ENCODE measurements at regions of chr7 and their contacts with region 1.

Region 1: DNA sequence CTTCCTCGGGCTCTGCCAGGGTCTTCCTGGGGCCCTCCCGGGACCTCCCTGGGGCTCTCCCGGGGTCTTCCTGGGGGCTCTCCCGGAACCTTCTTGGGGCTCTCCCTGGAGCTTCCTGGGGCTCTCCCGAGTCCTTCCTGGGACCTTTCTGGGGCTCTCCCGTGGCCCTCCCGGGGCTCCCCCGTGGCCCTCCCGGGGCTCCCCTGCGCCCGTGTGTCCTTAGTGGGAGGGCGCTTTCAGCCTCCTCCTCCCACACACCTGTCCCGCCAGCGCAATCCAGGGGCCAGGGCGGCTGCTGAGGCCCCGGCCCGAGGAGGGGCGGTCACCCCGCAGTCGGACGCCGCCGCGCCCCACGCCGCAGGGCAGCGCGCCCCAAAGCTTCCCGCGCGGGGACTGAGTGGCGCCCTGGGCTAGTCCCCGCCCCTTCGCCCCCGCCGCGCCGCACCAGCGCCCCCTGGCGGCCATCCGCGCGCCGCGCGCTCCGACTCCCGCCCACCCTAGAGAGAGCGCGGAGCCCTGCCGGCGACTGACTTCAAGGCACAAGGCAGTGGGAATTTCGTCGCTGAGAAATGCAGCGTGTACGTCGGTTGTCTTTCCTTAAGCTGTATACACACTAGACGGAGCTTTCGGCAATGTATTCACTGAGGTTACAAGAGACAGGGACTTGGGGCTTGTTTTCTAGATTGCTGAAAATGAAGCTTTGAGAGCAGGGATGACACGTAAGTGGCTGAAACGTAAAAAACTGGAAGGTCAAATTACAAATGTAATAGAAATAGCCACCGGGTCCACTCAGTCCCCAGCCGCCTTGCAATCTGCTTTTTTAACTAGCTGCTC is 47.1 kb downstream of the INSIG1 start:
- DNase-seq: peak; percentile 87
- H3K4me3 Mint-ChIP-seq: peak overlapping the region; percentile 53
- H3K27ac Mint-ChIP-seq: no peak overlapping the region
- H3K4me1 Mint-ChIP-seq: peaks cover 13% of the 10 kb centered on the region
- H3K27me3 Mint-ChIP-seq: peaks cover 12% of the 10 kb centered on the region

Region 2: DNA sequence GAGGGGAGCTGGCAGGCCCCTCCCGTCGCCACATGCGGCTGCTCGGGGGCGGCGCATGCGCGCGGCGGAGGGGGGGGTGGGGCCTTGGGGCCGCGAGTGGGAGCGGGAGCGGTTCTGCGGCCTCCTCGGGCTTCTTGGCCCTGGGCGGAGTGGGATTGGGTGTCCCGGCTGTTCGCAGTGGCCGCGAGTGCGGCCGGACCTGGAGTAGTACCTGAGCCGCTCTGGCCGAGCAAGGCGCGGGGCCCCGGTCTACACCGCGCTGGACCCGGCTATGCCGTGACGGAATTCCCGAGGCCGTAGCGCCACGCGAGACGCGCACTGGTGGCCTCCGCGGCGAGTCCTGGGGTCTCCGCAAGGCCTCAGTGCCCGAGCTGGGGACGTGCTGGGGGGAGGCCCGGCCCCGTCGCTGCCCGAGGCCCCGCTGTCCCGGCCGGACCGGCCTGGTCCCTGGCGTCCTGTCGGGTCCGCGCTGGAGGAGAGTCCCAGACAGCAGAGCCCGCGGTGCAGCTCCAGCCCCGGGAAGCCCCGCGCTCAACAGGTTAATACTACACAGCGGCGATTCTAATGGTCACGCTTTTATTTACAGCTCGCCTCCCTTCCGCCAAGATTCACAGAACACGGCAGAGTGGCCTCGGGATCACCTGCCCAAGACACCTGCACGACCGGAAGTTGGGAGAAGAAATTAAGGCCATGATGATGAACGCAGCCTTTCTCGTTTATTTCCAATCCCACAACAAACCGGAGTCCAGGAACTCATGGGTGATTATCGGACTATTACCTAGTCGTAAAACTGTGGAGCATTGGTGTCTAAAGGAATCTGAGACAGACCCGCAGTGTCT is 341.2 kb before region 1 on chr7:
- CTCF ChIA-PET with region 1: interaction called, 3 read pairs
- intact Hi-C with region 1: loop called (anchors 1 kb)
- DNase-seq: peak; percentile 75
- H3K4me3 Mint-ChIP-seq: peak overlapping the region; percentile 92
- H3K27ac Mint-ChIP-seq: peak overlapping the region; percentile 89
- H3K4me1 Mint-ChIP-seq: peaks cover 7% of the 10 kb centered on the region
- H3K27me3 Mint-ChIP-seq: no peaks in the 10 kb centered on the region

Region 3: DNA sequence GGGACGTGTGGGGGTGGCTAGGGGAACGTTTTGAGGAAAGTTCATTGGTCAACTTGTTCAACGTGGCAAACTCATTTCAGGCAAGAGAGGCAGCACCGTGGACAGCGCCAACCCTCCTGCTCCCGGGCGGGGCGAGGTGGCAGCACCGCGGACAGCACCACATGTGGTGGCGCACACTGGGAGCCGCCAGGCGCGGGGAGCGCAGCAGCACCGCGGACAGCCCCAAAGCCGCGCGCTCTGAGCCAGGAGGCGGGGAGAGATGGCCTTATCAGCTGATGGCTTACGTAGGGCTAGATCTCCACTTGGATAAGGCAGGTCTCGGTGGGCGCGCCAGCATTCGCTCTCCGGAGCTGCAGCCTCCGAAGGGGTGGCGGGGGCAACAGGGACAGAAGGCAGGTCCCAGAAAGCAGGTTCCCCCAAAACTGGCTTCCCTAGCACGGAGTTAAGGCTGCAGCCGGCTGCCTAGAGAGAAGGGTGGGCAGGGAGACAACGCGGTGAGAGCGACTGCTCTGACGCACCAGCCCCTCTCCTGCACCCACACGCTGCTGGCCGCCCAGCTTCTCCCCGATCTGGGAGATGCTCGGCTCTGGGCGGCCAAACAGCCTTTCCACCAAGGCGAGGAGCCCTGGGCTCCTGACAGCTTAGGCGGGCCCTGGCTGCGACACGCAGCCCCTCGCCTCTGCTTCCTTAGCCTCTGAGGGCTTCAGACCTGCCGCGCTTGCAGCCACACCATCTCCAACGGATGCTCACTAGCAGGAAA is 274.6 kb before region 1 on chr7 and contains the start of gene HTR5A:
- CTCF ChIA-PET with region 1: no interaction called
- intact Hi-C with region 1: loop called (anchors 10 kb)
- DNase-seq: peak; percentile 92
- H3K4me3 Mint-ChIP-seq: no peak within 1 kb of the TSS
- H3K27ac Mint-ChIP-seq: no peak within 1 kb of the TSS
- H3K4me1 Mint-ChIP-seq: peaks cover 2% of the 10 kb centered on the region
- H3K27me3 Mint-ChIP-seq: peaks cover 52% of the 10 kb centered on the region
- total RNA-seq, gene HTR5A: not detected

Region 4: GRCh38 chr7:155190688-155191087 is 154.1 kb before region 1 on chr7:
- CTCF ChIA-PET with region 1: interaction called, 12 read pairs
- intact Hi-C with region 1: loop called (anchors 1 kb)
- DNase-seq: peak; percentile 69
- H3K4me3 Mint-ChIP-seq: no peak overlapping the region
- H3K27ac Mint-ChIP-seq: no peak overlapping the region
- H3K4me1 Mint-ChIP-seq: peaks cover 11% of the 10 kb centered on the region
- H3K27me3 Mint-ChIP-seq: peaks cover 13% of the 10 kb centered on the region

Region 5: GRCh38 chr7:155283565-155284194 is 61.1 kb before region 1 on chr7:
- CTCF ChIA-PET with region 1: interaction called, 12 read pairs
- intact Hi-C with region 1: loop called (anchors 1 kb)
- DNase-seq: peak; percentile 60
- H3K4me3 Mint-ChIP-seq: no peak overlapping the region
- H3K27ac Mint-ChIP-seq: no peak overlapping the region
- H3K4me1 Mint-ChIP-seq: peaks cover 56% of the 10 kb centered on the region
- H3K27me3 Mint-ChIP-seq: peaks cover 3% of the 10 kb centered on the region

Region 6: GRCh38 chr7:155326385-155326784 is 18.4 kb before region 1 on chr7:
- CTCF ChIA-PET with region 1: interaction called, 10 read pairs
- intact Hi-C with region 1: no loop called
- DNase-seq: no peak
- H3K4me3 Mint-ChIP-seq: no peak overlapping the region
- H3K27ac Mint-ChIP-seq: no peak overlapping the region
- H3K4me1 Mint-ChIP-seq: no peaks in the 10 kb centered on the region
- H3K27me3 Mint-ChIP-seq: no peaks in the 10 kb centered on the region